ENCODE measurements at regions of chr14 and their contacts with region 1.

Region 1: DNA sequence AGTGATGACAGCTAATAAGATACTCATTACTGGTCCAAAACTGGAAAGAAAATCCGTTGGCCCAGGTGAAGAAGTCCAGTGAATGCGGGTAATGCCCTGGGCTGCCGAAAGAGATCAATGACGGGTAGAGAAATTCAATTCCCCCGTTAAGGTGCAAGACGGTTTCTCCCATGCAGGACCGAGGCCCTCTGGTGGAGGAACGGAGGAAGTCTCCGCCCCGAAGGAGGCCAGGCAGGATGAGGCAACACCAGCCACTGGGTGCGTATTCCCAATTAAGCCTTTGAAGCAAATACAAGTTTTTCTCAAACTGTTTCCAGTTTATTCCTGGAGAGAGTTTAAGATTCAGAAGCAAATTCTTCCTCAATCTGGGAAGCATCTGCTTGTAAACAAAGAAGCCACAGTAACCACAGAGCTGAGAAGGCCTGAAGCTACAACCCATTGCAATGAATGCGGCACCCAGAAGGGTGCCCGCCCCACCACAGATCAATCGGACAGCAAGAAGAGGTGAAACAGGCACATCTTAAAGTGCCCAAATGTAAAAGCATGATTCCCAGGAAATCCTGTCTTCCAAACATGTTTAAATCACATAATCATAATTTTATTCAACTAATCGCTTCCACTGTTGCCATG is 118.5 kb downstream of the TTC7B start:
- DNase-seq: peak; percentile 87
- ATAC-seq: peak; percentile 93
- H3K4me3 Mint-ChIP-seq: no peak overlapping the region
- H3K27ac Mint-ChIP-seq: peak overlapping the region; percentile 31
- H3K4me1 Mint-ChIP-seq: peaks cover 14% of the 10 kb centered on the region
- H3K27me3 Mint-ChIP-seq: no peaks in the 10 kb centered on the region
- CTCF ChIP-seq: peak; percentile 86

Region 2: DNA sequence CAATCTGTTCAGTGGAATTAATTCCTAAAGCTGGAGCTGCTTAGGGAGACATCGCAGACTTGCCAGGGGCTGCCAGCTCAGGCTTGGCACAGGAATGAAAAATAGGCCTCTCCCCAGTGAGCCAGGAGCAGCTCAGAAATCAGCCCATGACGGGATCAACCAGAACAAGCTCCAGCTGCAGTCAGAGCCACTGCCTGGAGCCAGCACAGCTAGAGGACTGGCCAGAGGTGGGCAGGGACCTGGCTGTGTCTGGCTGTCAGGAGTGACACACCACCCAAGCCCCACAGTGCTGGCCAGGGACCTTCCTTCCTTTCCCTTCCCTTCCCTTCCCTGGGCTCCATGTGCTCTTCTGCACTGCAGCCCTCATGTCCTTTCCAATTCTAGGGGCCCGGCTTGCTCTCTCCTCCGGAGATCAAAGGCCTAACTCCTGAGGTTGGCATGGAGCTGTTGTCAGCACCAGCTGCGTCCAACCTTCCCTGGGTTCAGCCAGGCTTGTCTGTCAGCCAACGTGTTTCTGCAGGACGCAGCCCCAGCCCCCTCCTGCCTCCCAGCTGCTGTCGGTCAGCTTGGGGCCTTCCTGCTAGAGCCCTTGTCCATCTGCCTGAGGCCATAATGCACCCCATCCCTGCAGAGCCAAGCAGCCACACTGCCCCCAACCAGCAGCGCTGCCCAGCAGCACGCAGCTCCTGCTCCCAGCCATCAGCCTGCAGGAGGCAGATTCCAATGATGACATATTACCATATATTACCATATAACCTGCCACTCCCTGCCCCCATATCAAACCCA is 151.5 kb before region 1 on chr14:
- CTCF ChIA-PET with region 1: interaction called, 20 read pairs
- POLR2A ChIA-PET with region 1: no interaction called
- DNase-seq: no peak
- ATAC-seq: peak; percentile 58
- H3K4me3 Mint-ChIP-seq: no peak overlapping the region
- H3K27ac Mint-ChIP-seq: peak overlapping the region; percentile 89
- H3K4me1 Mint-ChIP-seq: peaks cover 13% of the 10 kb centered on the region
- H3K27me3 Mint-ChIP-seq: no peaks in the 10 kb centered on the region
- CTCF ChIP-seq: no peak

Region 3: DNA sequence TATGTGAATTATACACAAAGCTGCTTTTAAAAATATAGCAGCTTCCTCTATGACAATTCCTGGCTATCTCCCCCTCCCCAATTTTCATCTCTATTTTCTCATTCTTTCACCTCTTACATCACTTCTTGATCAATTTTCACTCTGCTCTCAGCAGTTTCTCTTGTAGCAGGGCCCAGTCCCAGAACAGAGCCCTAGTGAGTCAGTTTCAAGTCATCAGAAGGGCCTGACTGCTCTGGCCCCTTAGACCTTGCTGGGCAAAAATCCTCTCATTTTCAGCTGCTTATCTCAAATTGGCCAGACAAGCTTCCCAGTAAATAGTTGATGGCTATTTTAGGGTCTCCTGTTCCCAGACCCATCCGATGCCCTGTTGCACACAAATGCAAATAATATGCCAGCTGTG is 17.1 kb after region 1 on chr14:
- CTCF ChIA-PET with region 1: no interaction called
- POLR2A ChIA-PET with region 1: no interaction called
- DNase-seq: no peak
- ATAC-seq: no peak
- H3K4me3 Mint-ChIP-seq: no peak overlapping the region
- H3K27ac Mint-ChIP-seq: no peak overlapping the region
- H3K4me1 Mint-ChIP-seq: peaks cover 29% of the 10 kb centered on the region
- H3K27me3 Mint-ChIP-seq: no peaks in the 10 kb centered on the region
- CTCF ChIP-seq: no peak

Region 4: GRCh38 chr14:90726656-90727055 is 29.0 kb after region 1 on chr14:
- CTCF ChIA-PET with region 1: interaction called, 12 read pairs
- POLR2A ChIA-PET with region 1: no interaction called
- DNase-seq: peak; percentile 24
- ATAC-seq: peak; percentile 88
- H3K4me3 Mint-ChIP-seq: no peak overlapping the region
- H3K27ac Mint-ChIP-seq: peak overlapping the region; percentile 75; the same call in 1 of the 2 replicates
- H3K4me1 Mint-ChIP-seq: peaks cover 8% of the 10 kb centered on the region
- H3K27me3 Mint-ChIP-seq: no peaks in the 10 kb centered on the region
- CTCF ChIP-seq: no peak

Region 5: DNA sequence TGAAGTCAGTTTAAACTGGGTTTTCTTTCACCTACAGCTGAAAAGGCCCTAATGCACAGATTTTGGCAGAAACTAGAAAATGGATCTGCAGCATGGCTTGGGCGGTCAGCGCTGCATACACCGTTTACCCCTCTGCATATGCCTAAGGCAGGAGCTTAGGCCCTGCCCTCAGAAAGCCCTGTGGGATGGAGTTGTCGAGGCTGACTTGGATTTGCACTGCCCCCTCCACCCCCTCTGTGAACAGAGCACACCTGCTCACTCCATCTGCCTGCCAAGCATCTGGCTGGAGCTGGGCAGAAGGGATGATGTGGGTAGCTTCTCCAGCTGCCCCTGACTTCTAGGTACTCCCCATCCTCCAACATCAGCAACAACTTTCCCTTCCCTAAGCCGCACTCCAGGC is 76.6 kb after region 1 on chr14:
- CTCF ChIA-PET with region 1: no interaction called
- POLR2A ChIA-PET with region 1: no interaction called
- DNase-seq: no peak
- ATAC-seq: no peak
- H3K4me3 Mint-ChIP-seq: no peak overlapping the region
- H3K27ac Mint-ChIP-seq: no peak overlapping the region
- H3K4me1 Mint-ChIP-seq: no peaks in the 10 kb centered on the region
- H3K27me3 Mint-ChIP-seq: no peaks in the 10 kb centered on the region
- CTCF ChIP-seq: no peak

Measured in WTC11 (cell line).